GM12878 (cell line): ENCODE measurements at regions of chrX and their contacts with region 1.

Region 1: DNA sequence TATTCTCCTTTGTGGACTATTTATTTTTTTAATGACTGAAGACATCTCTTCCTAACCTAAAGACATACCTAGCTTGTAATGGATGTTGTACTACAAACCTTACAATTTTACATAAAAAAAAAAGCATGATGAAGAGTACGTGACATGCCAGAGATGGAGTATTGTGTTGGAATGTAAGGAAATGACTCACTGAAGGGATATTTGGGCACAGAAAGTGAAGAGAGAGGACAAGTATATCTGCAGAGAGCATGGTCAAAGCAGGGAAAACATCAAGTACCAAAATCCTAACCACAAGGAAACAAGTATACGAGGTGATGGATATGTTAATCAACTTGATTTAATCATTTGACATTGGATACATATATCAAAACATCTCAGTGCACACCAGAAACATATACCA is 1051.4 kb upstream of the PRKX start:
- DNase-seq: no peak
- ATAC-seq: no peak
- H3K4me3 ChIP-seq: no peak overlapping the region
- H3K27ac ChIP-seq: no peak overlapping the region
- H3K4me1 ChIP-seq: no peaks in the 10 kb centered on the region
- H3K27me3 ChIP-seq: no peaks in the 10 kb centered on the region
- CTCF ChIP-seq: no peak
- EP300 ChIP-seq: no peak
- POLR2A ChIP-seq: no peak
- RAD21 ChIP-seq: no peak

Region 2: GRCh38 chrX:3231766-3232165 is 1533.1 kb before region 1 on chrX:
- CTCF ChIA-PET with region 1: no interaction called
- POLR2A ChIA-PET with region 1: interaction called, 13 read pairs
- RAD21 ChIA-PET with region 1: no interaction called
- SMC1A ChIA-PET with region 1: no interaction called
- in situ Hi-C with region 1: no loop called
- intact Hi-C with region 1: no loop called
- DNase-seq: no peak
- ATAC-seq: no peak
- H3K4me3 ChIP-seq: no peak overlapping the region
- H3K27ac ChIP-seq: no peak overlapping the region
- H3K4me1 ChIP-seq: no peaks in the 10 kb centered on the region
- H3K27me3 ChIP-seq: no peaks in the 10 kb centered on the region
- CTCF ChIP-seq: no peak
- EP300 ChIP-seq: no peak
- POLR2A ChIP-seq: no peak
- RAD21 ChIP-seq: no peak

Region 3: DNA sequence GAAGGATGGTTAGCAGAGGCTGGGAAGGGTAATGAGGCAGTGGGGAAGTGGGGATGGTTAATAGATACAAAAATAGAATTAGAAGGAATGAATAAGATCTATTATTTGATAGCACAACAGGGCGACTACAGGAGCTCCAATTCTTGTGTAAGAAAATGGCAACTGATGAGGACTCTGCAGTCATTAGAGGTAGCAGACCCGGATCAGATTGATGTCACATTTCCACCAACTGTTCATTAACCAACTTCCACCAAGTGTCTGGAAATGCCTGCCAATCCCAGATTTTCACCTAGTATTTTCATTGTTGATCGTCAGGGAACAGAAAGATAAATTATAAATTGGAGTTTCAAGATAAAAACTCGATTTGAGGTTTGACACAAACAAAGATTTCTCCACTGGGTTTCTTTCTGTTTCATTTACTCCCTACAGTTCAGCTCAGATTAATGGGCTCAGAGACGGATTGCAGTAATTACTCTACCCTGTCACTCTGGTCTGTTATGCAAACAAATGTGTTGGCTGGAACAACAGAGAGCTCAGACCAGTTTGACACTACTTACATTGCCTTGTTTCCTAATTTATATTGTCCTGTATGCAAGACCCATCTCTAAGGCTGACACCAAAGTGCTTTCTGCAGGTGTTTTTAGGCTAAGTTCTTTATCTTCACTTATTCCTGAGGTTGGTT is 142.3 kb before region 1 on chrX:
- CTCF ChIA-PET with region 1: no interaction called
- POLR2A ChIA-PET with region 1: no interaction called
- RAD21 ChIA-PET with region 1: no interaction called
- SMC1A ChIA-PET with region 1: no interaction called
- in situ Hi-C with region 1: no loop called
- intact Hi-C with region 1: no loop called
- DNase-seq: no peak
- ATAC-seq: no peak
- H3K4me3 ChIP-seq: no peak overlapping the region
- H3K27ac ChIP-seq: no peak overlapping the region
- H3K4me1 ChIP-seq: no peaks in the 10 kb centered on the region
- H3K27me3 ChIP-seq: no peaks in the 10 kb centered on the region
- CTCF ChIP-seq: no peak
- EP300 ChIP-seq: no peak
- POLR2A ChIP-seq: no peak
- RAD21 ChIP-seq: no peak

Region 4: DNA sequence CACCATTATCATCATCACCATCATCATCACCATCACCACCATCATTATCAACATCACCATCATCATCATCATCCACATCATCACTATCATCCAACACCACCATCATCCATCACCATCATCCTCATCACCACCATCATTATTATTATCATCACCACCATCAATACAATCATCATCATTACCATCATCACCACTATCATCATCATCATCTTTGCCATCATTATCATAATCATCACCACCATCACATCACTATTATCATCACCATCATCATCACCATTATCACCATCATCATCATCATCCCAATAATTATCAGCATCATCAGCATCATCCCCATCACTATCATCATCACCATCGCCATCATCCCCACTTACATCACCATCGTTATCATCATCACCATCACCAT is 29.6 kb before region 1 on chrX:
- CTCF ChIA-PET with region 1: no interaction called
- POLR2A ChIA-PET with region 1: no interaction called
- RAD21 ChIA-PET with region 1: no interaction called
- SMC1A ChIA-PET with region 1: no interaction called
- in situ Hi-C with region 1: no loop called
- intact Hi-C with region 1: no loop called
- DNase-seq: no peak
- ATAC-seq: no peak
- H3K4me3 ChIP-seq: no peak overlapping the region
- H3K27ac ChIP-seq: no peak overlapping the region
- H3K4me1 ChIP-seq: no peaks in the 10 kb centered on the region
- H3K27me3 ChIP-seq: no peaks in the 10 kb centered on the region
- CTCF ChIP-seq: no peak
- EP300 ChIP-seq: no peak
- POLR2A ChIP-seq: no peak
- RAD21 ChIP-seq: no peak

Region 5: DNA sequence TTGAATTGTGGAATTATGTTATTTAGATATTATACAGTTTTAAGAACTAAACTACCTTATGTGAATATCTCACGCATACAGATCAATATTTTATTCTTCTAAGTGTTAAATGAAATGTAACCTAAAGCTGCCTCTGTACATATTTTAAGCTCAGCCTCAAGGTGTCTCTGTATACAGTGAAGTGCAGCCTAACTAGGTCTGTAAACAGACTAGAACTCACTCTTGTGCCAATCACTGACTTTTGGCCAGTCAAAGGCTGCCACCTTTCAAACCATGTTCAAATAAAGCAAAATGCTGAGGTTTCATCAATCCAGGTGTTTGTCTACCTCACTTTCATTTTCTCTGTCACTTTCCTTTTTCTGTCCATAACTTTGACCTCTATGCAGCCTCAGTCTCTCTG is 23.1 kb after region 1 on chrX:
- CTCF ChIA-PET with region 1: no interaction called
- POLR2A ChIA-PET with region 1: no interaction called
- RAD21 ChIA-PET with region 1: no interaction called
- SMC1A ChIA-PET with region 1: no interaction called
- in situ Hi-C with region 1: no loop called
- intact Hi-C with region 1: no loop called
- DNase-seq: no peak
- ATAC-seq: no peak
- H3K4me3 ChIP-seq: no peak overlapping the region
- H3K27ac ChIP-seq: no peak overlapping the region
- H3K4me1 ChIP-seq: no peaks in the 10 kb centered on the region
- H3K27me3 ChIP-seq: no peaks in the 10 kb centered on the region
- CTCF ChIP-seq: no peak
- EP300 ChIP-seq: no peak
- POLR2A ChIP-seq: no peak
- RAD21 ChIP-seq: no peak